GM12878 (cell line): ENCODE measurements at regions of chr12 and their contacts with region 1.

Region 1: DNA sequence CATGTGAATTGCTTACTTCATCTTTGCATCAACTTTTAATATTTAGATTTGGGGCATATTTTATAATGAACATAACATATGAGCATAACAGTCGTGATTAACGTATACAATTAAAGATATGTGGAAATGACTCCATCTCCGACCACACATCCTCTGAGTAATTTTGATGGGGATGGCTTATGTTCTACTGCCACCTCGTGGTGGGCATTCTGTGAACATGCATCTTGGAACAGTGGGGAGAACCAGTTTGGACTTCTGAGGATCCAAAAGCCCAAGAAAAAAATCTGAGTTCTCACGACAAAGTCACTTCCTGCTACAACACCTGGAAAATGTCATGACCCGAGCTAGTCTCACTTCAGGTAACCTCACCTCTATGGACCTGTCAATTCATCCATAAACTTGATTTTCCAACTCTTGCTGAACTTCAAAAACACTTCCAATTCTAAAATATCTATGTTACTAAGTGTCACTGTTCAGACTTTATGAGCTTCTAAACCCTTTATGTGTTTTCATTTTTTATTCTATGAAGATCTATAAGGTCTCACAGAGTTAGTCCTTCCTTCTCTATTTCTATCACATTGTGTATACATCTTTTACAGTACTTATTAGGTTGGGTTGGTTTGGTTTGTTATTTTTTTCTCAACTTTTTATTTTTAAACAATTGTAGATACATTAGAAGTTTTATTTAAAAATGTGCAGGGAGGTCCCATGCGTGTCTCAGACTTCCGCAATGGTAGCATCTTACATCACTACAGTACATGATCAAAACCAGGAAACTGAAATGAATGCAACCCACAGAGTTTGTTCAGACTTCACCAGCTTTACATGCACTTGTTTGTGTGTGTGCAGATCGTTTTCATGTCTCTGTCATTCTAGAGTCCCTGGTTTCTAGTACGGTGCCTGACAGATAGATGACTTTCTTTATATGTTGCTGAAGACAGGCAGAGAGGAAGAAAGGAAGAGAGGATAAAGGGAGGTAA is 38.2 kb upstream of the STAB2 start:
- DNase-seq: peak; percentile 76
- ATAC-seq: peak; percentile 93
- H3K4me3 ChIP-seq: no peak overlapping the region
- H3K27ac ChIP-seq: peak overlapping the region; percentile 29; the same call in 1 of the 2 replicates
- H3K4me1 ChIP-seq: peaks cover 4% of the 10 kb centered on the region
- H3K27me3 ChIP-seq: no peaks in the 10 kb centered on the region
- CTCF ChIP-seq: peak; percentile 73 to 87 (median 79)
- EP300 ChIP-seq: peak in 1 of 2 experiments; percentile 78; a peak in 1 of 4 replicates
- POLR2A ChIP-seq: no peak
- RAD21 ChIP-seq: peak; percentile 99

Region 2: GRCh38 chr12:101939856-101940265 is 1609.1 kb before region 1 on chr12:
- CTCF ChIA-PET with region 1: interaction called, 3 read pairs
- POLR2A ChIA-PET with region 1: no interaction called
- RAD21 ChIA-PET with region 1: no interaction called
- SMC1A ChIA-PET with region 1: interaction called, 5 read pairs
- in situ Hi-C with region 1: loop called (anchors 25 kb)
- intact Hi-C with region 1: no loop called
- DNase-seq: no peak
- ATAC-seq: peak; percentile 32
- H3K4me3 ChIP-seq: no peak overlapping the region
- H3K27ac ChIP-seq: peak overlapping the region; percentile 62
- H3K4me1 ChIP-seq: peaks cover 73% of the 10 kb centered on the region
- H3K27me3 ChIP-seq: no peaks in the 10 kb centered on the region
- CTCF ChIP-seq: peak; percentile 69 to 80 (median 70)
- EP300 ChIP-seq: no peak
- POLR2A ChIP-seq: no peak
- RAD21 ChIP-seq: peak; percentile 97

Region 3: DNA sequence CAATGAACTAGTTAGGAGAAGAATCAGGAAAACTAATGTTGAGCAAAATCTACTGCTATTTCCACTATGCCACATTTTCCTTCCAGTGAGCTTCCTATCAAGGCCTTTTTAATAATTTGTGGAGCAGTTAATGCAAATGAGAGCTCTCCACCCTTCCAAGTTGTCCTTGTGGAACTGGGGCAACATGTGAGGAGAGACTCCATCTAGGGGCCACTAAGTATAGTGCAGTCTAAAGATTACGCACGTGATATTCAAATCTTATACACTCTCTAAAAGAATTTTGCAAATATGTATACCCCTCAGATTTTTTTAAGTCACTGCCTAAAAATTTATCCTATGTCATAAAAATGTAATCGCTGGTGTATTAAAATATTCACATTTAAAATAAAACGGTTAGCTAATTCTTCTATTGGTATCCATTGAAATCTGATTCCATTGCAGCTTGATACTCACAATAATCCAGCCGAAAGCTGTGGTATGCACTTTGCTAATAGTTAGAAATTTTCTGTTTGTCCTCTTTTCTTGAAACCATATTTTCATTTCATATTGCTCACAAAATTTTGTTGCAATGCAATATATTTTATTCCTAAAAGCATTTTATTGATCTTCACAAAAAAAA is 732.0 kb before region 1 on chr12:
- CTCF ChIA-PET with region 1: interaction called, 8 read pairs
- POLR2A ChIA-PET with region 1: no interaction called
- RAD21 ChIA-PET with region 1: interaction called, 3 read pairs
- SMC1A ChIA-PET with region 1: interaction called, 10 read pairs
- in situ Hi-C with region 1: no loop called
- intact Hi-C with region 1: no loop called
- DNase-seq: no peak
- ATAC-seq: peak; percentile 76
- H3K4me3 ChIP-seq: no peak overlapping the region
- H3K27ac ChIP-seq: no peak overlapping the region
- H3K4me1 ChIP-seq: no peaks in the 10 kb centered on the region
- H3K27me3 ChIP-seq: no peaks in the 10 kb centered on the region; a peak in 1 of 4 replicates
- CTCF ChIP-seq: peak; percentile 53 to 61 (median 60)
- EP300 ChIP-seq: no peak
- POLR2A ChIP-seq: no peak
- RAD21 ChIP-seq: peak; percentile 49

Region 4: GRCh38 chr12:102939670-102940222 is 609.2 kb before region 1 on chr12:
- CTCF ChIA-PET with region 1: interaction called, 24 read pairs
- POLR2A ChIA-PET with region 1: no interaction called
- RAD21 ChIA-PET with region 1: interaction called, 16 read pairs
- SMC1A ChIA-PET with region 1: interaction called, 23 read pairs
- in situ Hi-C with region 1: no loop called
- intact Hi-C with region 1: no loop called
- DNase-seq: no peak
- ATAC-seq: peak; percentile 57
- H3K4me3 ChIP-seq: no peak overlapping the region
- H3K27ac ChIP-seq: no peak overlapping the region
- H3K4me1 ChIP-seq: no peaks in the 10 kb centered on the region
- H3K27me3 ChIP-seq: no peaks in the 10 kb centered on the region
- CTCF ChIP-seq: peak; percentile 21 to 38 (median 37); a peak in 3 of 6 replicates
- EP300 ChIP-seq: no peak
- POLR2A ChIP-seq: no peak
- RAD21 ChIP-seq: peak; percentile 57; the same call in 1 of the 2 replicates

Region 5: GRCh38 chr12:103102225-103102744 is 446.6 kb before region 1 on chr12:
- CTCF ChIA-PET with region 1: interaction called, 12 read pairs
- POLR2A ChIA-PET with region 1: no interaction called
- RAD21 ChIA-PET with region 1: interaction called, 3 read pairs
- SMC1A ChIA-PET with region 1: interaction called, 4 read pairs
- in situ Hi-C with region 1: no loop called
- intact Hi-C with region 1: no loop called
- DNase-seq: peak; percentile 72
- ATAC-seq: peak; percentile 91
- H3K4me3 ChIP-seq: no peak overlapping the region
- H3K27ac ChIP-seq: peak overlapping the region; percentile 82
- H3K4me1 ChIP-seq: peaks cover 29% of the 10 kb centered on the region
- H3K27me3 ChIP-seq: no peaks in the 10 kb centered on the region
- CTCF ChIP-seq: no peak
- EP300 ChIP-seq: peak; percentile 73 to 89; a peak in 3 of 4 replicates
- POLR2A ChIP-seq: no peak
- RAD21 ChIP-seq: peak; percentile 22; the same call in 1 of the 2 replicates

Region 6: DNA sequence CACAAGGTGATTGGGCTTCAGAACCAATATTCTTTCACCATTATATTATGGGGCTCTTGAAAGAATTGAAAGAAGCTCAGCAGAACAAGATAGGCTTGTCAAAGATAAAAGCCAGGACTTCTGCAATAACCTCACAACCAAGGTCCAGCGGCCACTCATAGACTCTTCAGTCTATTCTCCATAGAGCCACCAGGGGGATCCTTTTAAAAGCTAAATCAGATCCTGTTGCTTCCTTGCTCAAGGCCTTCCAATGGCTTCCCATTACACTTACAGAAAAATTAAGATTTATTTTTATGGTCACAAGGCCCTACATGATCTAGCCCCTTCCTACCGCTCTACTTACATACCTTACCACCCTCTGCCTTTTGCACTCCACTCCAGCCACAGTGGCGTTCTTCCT is 222.7 kb before region 1 on chr12:
- CTCF ChIA-PET with region 1: interaction called, 22 read pairs
- POLR2A ChIA-PET with region 1: no interaction called
- RAD21 ChIA-PET with region 1: interaction called, 13 read pairs
- SMC1A ChIA-PET with region 1: interaction called, 23 read pairs
- in situ Hi-C with region 1: no loop called
- intact Hi-C with region 1: loop called (anchors 1 kb)
- DNase-seq: no peak
- ATAC-seq: peak; percentile 65
- H3K4me3 ChIP-seq: no peak overlapping the region
- H3K27ac ChIP-seq: no peak overlapping the region
- H3K4me1 ChIP-seq: no peaks in the 10 kb centered on the region
- H3K27me3 ChIP-seq: no peaks in the 10 kb centered on the region
- CTCF ChIP-seq: peak; percentile 26 to 42 (median 31); a peak in 4 of 6 replicates
- EP300 ChIP-seq: no peak
- POLR2A ChIP-seq: no peak
- RAD21 ChIP-seq: peak; percentile 70

Region 7: GRCh38 chr12:103523771-103524170 is 25.1 kb before region 1 on chr12:
- CTCF ChIA-PET with region 1: interaction called, 58 read pairs
- POLR2A ChIA-PET with region 1: no interaction called
- RAD21 ChIA-PET with region 1: interaction called, 34 read pairs
- SMC1A ChIA-PET with region 1: interaction called, 111 read pairs
- in situ Hi-C with region 1: no loop called
- intact Hi-C with region 1: no loop called
- DNase-seq: no peak
- ATAC-seq: no peak
- H3K4me3 ChIP-seq: no peak overlapping the region
- H3K27ac ChIP-seq: no peak overlapping the region
- H3K4me1 ChIP-seq: no peaks in the 10 kb centered on the region
- H3K27me3 ChIP-seq: no peaks in the 10 kb centered on the region
- CTCF ChIP-seq: no peak
- EP300 ChIP-seq: no peak
- POLR2A ChIP-seq: no peak
- RAD21 ChIP-seq: no peak

Region 8: GRCh38 chr12:103680591-103681141 is 131.8 kb after region 1 on chr12:
- CTCF ChIA-PET with region 1: no interaction called
- POLR2A ChIA-PET with region 1: no interaction called
- RAD21 ChIA-PET with region 1: no interaction called
- SMC1A ChIA-PET with region 1: no interaction called
- in situ Hi-C with region 1: no loop called
- intact Hi-C with region 1: no loop called
- DNase-seq: no peak
- ATAC-seq: no peak
- H3K4me3 ChIP-seq: no peak overlapping the region
- H3K27ac ChIP-seq: no peak overlapping the region
- H3K4me1 ChIP-seq: no peaks in the 10 kb centered on the region
- H3K27me3 ChIP-seq: no peaks in the 10 kb centered on the region
- CTCF ChIP-seq: no peak
- EP300 ChIP-seq: no peak
- POLR2A ChIP-seq: no peak
- RAD21 ChIP-seq: no peak